WTC11 (cell line): ENCODE measurements at regions of chr21 and their contacts with region 1.

Region 1: GRCh38 chr21:36104317-36105300 is 30.3 kb upstream of the CBR3 start:
- DNase-seq: peak; percentile 88
- ATAC-seq: peak; percentile 79
- H3K4me3 Mint-ChIP-seq: peak overlapping the region; percentile 92
- H3K27ac Mint-ChIP-seq: peak overlapping the region; percentile 95
- H3K4me1 Mint-ChIP-seq: peaks cover 84% of the 10 kb centered on the region
- H3K27me3 Mint-ChIP-seq: no peaks in the 10 kb centered on the region
- CTCF ChIP-seq: peak; percentile 64

Region 2: DNA sequence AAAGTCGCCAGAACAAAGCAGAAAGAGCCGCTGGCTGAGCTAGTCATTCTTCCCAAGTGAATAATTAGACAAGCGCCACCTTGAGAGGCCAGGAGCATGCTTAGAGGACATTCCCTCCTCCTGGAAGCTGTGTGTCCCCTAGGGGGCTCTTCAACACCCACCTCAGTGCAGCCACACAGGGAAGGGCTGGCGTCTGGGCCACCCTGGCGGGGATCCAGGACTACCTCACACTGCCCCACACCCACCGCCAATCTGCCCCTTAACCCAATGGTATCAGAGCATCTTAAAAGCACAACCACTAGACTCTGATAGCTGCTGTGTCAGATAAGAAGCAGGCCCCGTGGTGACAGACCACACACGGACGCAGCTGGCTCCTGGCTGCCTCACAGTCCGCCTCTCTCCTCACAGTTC is 69.2 kb before region 1 on chr21:
- CTCF ChIA-PET with region 1: interaction called, 13 read pairs
- POLR2A ChIA-PET with region 1: interaction called, 3 read pairs
- DNase-seq: peak; percentile 29
- ATAC-seq: peak; percentile 82
- H3K4me3 Mint-ChIP-seq: no peak overlapping the region
- H3K27ac Mint-ChIP-seq: peak overlapping the region; percentile 85
- H3K4me1 Mint-ChIP-seq: peaks cover 41% of the 10 kb centered on the region
- H3K27me3 Mint-ChIP-seq: no peaks in the 10 kb centered on the region
- CTCF ChIP-seq: no peak